Activated CD4-positive, alpha-beta T cell treated with anti-CD3 and anti-CD28 coated beads for 36 hours (primary cell): ENCODE measurements at regions of chr7 and their contacts with region 1.

Region 1: GRCh38 chr7:25894902-25895791 is 256.9 kb upstream of the NFE2L3 start:
- DNase-seq: peak; percentile 81
- ATAC-seq: peak; percentile 63
- H3K4me3 Mint-ChIP-seq: peak overlapping the region; percentile 47
- H3K27ac Mint-ChIP-seq: no peak overlapping the region
- H3K4me1 Mint-ChIP-seq: peaks cover 28% of the 10 kb centered on the region
- H3K27me3 Mint-ChIP-seq: peaks cover 2% of the 10 kb centered on the region

Region 2: GRCh38 chr7:25908154-25908949 is 13.2 kb after region 1 on chr7:
- CTCF ChIA-PET with region 1: interaction called, 16 read pairs
- POLR2A ChIA-PET with region 1: interaction called, 3 read pairs
- intact Hi-C with region 1: no loop called
- DNase-seq: no peak
- ATAC-seq: peak; percentile 47
- H3K4me3 Mint-ChIP-seq: no peak overlapping the region
- H3K27ac Mint-ChIP-seq: no peak overlapping the region
- H3K4me1 Mint-ChIP-seq: peaks cover 14% of the 10 kb centered on the region
- H3K27me3 Mint-ChIP-seq: peaks cover 10% of the 10 kb centered on the region

Region 3: GRCh38 chr7:26070290-26070689 is 175.1 kb after region 1 on chr7:
- CTCF ChIA-PET with region 1: interaction called, 52 read pairs
- POLR2A ChIA-PET with region 1: no interaction called
- intact Hi-C with region 1: loop called (anchors 5 kb)
- DNase-seq: no peak
- ATAC-seq: no peak
- H3K4me3 Mint-ChIP-seq: no peak overlapping the region
- H3K27ac Mint-ChIP-seq: no peak overlapping the region
- H3K4me1 Mint-ChIP-seq: no peaks in the 10 kb centered on the region
- H3K27me3 Mint-ChIP-seq: peaks cover 2% of the 10 kb centered on the region

Region 4: GRCh38 chr7:26151953-26152781 is 257.0 kb after region 1 on chr7 and contains the start of gene NFE2L3:
- CTCF ChIA-PET with region 1: interaction called, 3 read pairs
- POLR2A ChIA-PET with region 1: no interaction called
- intact Hi-C with region 1: loop called in 1 of 2 experiments (anchors 2 kb)
- DNase-seq: peak; percentile 91
- ATAC-seq: peak; percentile 68
- H3K4me3 Mint-ChIP-seq: peak within 1 kb of the TSS; percentile 93
- H3K27ac Mint-ChIP-seq: peak within 1 kb of the TSS; percentile 97
- H3K4me1 Mint-ChIP-seq: peaks cover 52% of the 10 kb centered on the region
- H3K27me3 Mint-ChIP-seq: no peaks in the 10 kb centered on the region
- total RNA-seq, gene NFE2L3: 19.9 to 23.8 TPM

Region 5: DNA sequence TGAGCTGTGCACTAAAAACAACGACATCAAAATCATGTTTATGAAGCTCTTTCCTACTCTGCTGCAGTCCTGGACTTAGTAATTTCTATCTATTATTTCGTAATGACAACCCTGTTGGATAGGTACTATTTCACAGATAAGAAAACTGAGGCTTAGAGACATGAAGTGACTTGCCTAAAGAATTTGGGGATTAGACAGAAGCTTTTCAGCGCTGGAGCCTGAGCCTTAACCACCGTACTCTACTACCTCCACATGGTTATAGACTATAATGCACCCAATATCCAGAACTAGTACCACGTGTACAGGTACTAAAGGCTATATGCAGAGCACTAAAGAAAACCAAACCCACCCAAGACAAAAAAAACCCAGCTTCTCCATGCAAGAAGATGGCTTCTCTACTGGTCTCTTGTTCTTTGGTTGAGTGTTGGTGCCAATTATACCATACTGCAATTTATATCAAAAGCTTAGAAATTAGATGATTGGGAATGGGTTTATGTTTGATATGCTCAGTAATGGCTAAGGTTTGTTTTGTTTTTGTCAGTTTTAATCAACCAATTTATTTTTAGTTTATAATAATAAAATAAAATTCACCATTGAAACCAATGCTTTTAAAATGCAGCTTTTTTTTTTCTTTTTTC is 390.0 kb after region 1 on chr7:
- CTCF ChIA-PET with region 1: interaction called, 12 read pairs
- POLR2A ChIA-PET with region 1: no interaction called
- intact Hi-C with region 1: loop called (anchors 2 kb)
- DNase-seq: peak; percentile 33
- ATAC-seq: peak; percentile 94
- H3K4me3 Mint-ChIP-seq: no peak overlapping the region
- H3K27ac Mint-ChIP-seq: no peak overlapping the region
- H3K4me1 Mint-ChIP-seq: peaks cover 4% of the 10 kb centered on the region
- H3K27me3 Mint-ChIP-seq: no peaks in the 10 kb centered on the region

Region 6: DNA sequence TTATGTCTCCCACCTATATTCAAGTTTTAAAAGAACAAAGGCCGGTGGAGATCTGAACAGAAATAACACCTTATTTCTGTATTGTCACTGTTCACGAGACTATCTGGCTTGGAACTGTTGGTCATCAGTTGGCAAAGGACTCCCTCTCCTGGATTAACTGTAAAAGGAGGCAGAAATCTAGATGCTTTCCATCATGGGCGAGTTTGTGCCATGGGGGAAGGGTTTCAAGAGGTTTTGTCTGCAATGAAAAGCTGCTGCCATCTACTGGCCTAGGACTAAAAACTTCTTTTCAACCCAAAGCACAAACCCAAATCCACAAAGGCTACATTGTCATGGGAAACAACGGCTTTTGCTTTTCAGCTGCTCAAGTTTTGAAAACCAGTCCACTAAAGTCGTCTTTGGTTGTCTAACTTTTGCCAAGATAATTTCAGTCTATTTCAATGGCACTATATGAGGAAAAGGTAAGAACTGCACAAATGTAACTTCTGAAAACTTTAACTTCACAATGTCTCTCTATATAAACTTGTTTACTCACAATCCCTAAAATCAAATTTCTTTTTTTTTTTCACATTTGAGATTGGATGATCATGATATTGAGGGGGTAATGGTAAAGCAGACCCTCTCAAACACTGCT is 772.5 kb after region 1 on chr7:
- CTCF ChIA-PET with region 1: interaction called, 25 read pairs
- POLR2A ChIA-PET with region 1: no interaction called
- intact Hi-C with region 1: loop called (anchors 1 kb)
- DNase-seq: peak; percentile 68
- ATAC-seq: peak; percentile 61
- H3K4me3 Mint-ChIP-seq: no peak overlapping the region
- H3K27ac Mint-ChIP-seq: no peak overlapping the region
- H3K4me1 Mint-ChIP-seq: peaks cover 15% of the 10 kb centered on the region
- H3K27me3 Mint-ChIP-seq: peaks cover 11% of the 10 kb centered on the region